Right ventricle myocardium superior (tissue), 1 donor: ENCODE measurements at regions of chr20 and their contacts with region 1.

Region 1: DNA sequence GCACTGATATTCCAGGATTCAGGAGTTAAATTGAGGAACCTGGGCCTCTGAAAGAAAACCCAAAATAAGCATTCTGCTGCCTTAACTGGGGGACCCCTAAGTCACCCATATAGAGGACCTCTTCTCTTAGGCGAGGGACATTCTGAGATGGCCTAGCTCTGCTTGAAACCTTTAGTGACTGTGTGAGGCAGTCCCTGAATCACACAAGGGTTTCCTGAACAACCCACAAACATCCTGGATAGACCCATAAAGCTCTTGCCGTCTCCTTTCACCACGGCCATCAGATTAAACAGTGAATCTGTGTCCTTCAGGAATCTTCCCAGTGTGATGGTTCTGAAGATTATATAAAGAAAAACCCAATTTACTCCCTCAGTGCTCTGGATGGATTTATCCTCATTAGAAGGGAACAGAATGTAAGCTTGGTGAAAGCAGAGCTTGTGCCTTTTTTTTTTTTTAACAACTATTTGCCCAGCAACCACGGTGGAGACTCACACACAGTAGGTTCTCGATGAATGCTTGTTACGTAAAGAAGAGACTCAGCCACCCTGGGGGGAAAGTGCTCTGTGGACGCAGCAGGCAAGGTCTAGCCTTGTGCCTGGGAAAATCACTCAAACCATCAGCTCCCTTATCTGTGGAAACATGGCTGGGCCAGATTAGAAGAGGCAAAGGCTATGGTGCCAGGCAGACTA is 39.1 kb upstream of the SIRPG start:
- DNase-seq: no peak
- ATAC-seq: no peak

Region 2: GRCh38 chr20:1661542-1662299 is 34.9 kb before region 1 on chr20:
- intact Hi-C with region 1: loop called (anchors 2 kb)
- DNase-seq: no peak
- ATAC-seq: no peak

Region 3: GRCh38 chr20:1741309-1742048 is 44.8 kb after region 1 on chr20:
- intact Hi-C with region 1: no loop called
- DNase-seq: no peak
- ATAC-seq: no peak